ENCODE measurements at regions of chr9 and their contacts with region 1.

Region 1: DNA sequence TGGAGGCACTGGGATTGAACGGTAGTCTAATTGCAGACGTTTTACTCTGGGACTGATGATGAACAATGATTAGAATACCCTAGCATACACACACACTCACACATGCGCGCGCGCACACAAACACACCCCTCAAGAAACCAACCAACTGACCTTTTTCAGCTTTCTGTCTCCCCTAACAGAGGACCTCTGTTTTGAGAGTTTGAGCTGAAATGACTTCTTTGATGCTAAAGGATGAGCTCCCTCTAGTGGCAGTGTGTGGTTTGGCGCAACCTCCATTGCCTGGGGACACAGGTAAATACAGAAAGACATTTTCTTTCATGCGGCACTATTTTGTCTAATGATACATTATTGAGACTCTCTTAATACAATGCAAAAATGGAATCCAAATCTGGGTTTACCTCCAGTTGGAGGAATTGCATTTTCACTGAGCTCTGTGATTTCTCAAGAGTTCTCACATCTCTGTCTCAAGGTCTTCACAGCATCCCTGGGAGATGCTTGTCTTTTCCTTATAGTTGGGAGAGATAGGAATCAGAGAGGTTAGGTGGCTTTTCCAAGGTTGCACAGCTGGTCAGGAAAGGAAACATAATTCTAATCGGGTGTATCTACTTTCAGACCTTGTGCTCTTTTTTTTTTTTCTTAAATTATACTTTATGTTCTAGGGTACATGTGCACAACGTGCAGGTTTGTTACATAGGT is 187.5 kb downstream of the TMEM38B start:
- DNase-seq: peak; percentile 74
- H3K4me3 Mint-ChIP-seq: no peak overlapping the region
- H3K27ac Mint-ChIP-seq: no peak overlapping the region
- H3K4me1 Mint-ChIP-seq: no peaks in the 10 kb centered on the region
- H3K27me3 Mint-ChIP-seq: peaks cover 13% of the 10 kb centered on the region
- CTCF ChIP-seq: peak; percentile 69

Region 2: DNA sequence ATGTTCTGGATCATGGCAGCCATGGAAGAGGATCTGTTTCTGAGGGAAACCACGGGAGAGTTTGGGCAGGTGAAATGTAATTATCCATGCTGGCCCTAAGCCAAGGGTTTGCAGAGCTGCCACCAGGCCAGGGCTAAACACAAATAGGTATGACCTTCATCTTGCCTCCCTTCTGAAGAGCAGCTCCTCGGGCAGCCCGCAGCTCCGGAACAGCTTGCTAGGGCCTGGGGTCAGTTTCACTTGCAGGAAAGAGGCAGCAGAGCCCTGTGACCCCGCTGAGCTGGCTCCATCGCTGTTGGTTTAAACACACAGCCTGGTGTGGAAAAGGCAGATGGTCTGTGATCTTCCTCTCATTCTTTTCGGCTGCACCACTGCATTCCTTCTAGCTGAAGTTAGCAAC is 46.1 kb before region 1 on chr9:
- CTCF ChIA-PET with region 1: interaction called, 308 read pairs
- POLR2A ChIA-PET with region 1: interaction called, 3 read pairs
- intact Hi-C with region 1: no loop called
- DNase-seq: no peak
- H3K4me3 Mint-ChIP-seq: no peak overlapping the region
- H3K27ac Mint-ChIP-seq: no peak overlapping the region
- H3K4me1 Mint-ChIP-seq: no peaks in the 10 kb centered on the region
- H3K27me3 Mint-ChIP-seq: peaks cover 9% of the 10 kb centered on the region
- CTCF ChIP-seq: no peak

Region 3: DNA sequence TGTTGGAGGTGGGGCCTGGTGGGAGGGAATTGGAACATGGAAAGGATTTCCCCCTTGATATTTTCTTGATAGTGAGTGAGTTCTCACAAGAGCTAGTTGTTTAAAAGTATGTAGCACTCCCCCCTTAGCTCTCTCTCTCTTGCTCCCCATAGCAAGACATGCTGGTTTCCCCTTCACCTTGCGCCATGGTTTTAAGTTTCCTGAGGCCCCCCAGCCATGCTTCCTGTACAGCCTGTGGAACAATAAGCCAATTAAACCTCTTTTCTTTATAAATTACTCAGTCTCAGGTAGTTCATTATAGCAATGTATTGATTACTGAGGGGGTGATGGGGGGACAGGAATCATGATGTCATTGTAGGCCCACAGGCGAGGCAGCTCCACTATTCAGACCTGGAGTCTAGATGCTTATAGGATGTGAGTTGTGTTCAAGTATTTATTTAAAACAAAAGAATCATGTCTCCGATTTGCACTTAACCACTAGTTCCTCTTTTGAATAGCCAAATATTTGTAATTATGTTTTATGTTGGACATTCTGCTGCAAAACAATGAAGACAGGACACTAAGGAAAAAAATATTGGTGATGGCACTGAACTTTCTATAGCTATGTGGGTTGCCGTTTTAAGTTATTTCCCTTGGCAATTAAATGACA is 30.8 kb before region 1 on chr9:
- CTCF ChIA-PET with region 1: interaction called, 308 read pairs
- POLR2A ChIA-PET with region 1: no interaction called
- intact Hi-C with region 1: no loop called
- DNase-seq: no peak
- H3K4me3 Mint-ChIP-seq: no peak overlapping the region
- H3K27ac Mint-ChIP-seq: no peak overlapping the region
- H3K4me1 Mint-ChIP-seq: no peaks in the 10 kb centered on the region
- H3K27me3 Mint-ChIP-seq: no peaks in the 10 kb centered on the region
- CTCF ChIP-seq: no peak

Region 4: GRCh38 chr9:105858006-105858690 is 23.7 kb before region 1 on chr9:
- CTCF ChIA-PET with region 1: interaction called, 20 read pairs
- POLR2A ChIA-PET with region 1: no interaction called
- intact Hi-C with region 1: no loop called
- DNase-seq: no peak
- H3K4me3 Mint-ChIP-seq: no peak overlapping the region
- H3K27ac Mint-ChIP-seq: no peak overlapping the region
- H3K4me1 Mint-ChIP-seq: peaks cover 13% of the 10 kb centered on the region
- H3K27me3 Mint-ChIP-seq: no peaks in the 10 kb centered on the region
- CTCF ChIP-seq: no peak

Region 5: DNA sequence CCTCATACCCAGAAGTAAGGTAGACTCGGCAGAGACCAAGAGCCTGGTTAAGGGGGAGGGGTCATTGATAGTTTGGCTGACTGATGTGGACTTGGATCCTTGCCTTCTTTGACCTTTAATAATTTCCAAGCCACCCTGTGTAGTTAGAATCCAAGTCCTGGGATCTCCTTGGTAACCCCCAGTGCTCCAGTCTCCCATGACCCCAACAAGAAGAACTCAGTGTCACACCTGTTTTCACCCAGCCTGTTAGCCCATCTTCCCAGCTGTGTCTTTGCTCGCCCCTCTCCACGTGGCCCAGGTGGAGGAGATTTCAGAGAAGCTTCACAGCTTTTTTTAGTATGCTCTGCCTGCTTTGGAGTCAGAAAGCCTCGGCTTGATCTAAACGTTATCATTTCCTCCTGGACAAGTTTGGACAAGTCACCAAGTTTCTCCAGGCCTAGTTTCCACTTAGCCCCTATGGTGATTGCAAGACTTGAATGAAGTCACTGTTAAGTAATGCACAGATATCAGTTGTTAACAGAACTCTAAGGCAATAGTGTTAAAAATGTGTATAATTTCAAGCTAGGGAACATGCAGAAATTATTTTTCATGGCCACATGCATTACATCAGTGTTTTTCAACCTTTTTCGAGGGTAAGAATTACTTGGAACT is 17.4 kb before region 1 on chr9:
- CTCF ChIA-PET with region 1: interaction called, 62 read pairs
- POLR2A ChIA-PET with region 1: no interaction called
- intact Hi-C with region 1: no loop called
- DNase-seq: peak; percentile 49
- H3K4me3 Mint-ChIP-seq: peak overlapping the region; percentile 24
- H3K27ac Mint-ChIP-seq: peak overlapping the region; percentile 96
- H3K4me1 Mint-ChIP-seq: peaks cover 21% of the 10 kb centered on the region
- H3K27me3 Mint-ChIP-seq: no peaks in the 10 kb centered on the region
- CTCF ChIP-seq: no peak

Measured in MCF 10A (cell line).